ENCODE measurements at regions of chr1 and their contacts with region 1.

Region 1: DNA sequence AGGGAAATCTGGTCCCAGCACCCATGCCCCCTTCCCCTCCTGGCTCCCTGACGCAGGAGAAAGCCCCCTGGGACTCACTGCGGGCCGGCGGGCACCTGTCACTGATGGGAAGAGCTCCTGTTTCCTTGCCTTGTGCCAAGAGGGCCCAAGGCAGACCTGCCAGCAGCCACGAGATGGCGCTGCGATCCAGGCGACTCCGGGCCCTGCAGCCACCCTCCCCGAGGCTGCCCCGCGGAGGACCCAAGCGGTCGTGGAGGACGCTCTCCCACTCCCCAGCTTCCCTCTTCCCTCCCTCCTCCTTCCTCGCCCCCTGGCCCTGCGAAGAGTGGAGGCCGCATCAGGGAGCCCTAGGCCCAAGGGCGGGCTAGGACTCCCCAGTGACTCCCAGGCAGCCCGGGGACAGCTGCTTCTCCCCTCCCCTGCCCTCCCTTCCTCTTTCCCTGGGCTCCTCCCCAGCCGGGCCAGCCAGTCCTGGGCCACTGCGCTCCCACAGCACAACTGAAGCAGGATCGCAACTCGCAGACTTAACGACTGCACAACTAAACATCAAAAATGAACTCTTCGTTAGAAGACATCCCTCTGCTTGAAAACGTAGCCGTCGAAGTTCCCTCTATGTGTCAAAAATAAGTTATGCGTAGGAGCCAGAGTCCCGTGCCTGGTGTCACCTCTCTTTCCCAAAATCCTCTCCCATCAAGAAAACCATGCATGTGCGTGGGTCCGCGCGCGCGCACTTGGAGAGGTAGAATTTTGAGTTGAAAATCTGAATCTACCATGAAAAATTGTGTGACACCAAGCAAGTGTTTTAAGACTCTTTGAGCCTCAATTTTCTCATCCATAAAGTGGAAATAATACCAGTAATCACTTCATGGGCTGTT is 34.2 kb downstream of the BATF3 start:
- DNase-seq: peak; percentile 84
- ATAC-seq: peak; percentile 93
- H3K4me3 Mint-ChIP-seq: peak overlapping the region; percentile 59
- H3K27ac Mint-ChIP-seq: peak overlapping the region; percentile 63
- H3K4me1 Mint-ChIP-seq: peaks cover 16% of the 10 kb centered on the region
- H3K27me3 Mint-ChIP-seq: peaks cover 8% of the 10 kb centered on the region
- CTCF ChIP-seq: peak; percentile 95

Region 2: GRCh38 chr1:212613455-212614390 is 51.8 kb before region 1 on chr1:
- CTCF ChIA-PET with region 1: interaction called, 12 read pairs
- POLR2A ChIA-PET with region 1: no interaction called
- intact Hi-C with region 1: no loop called
- DNase-seq: no peak
- ATAC-seq: no peak
- H3K4me3 Mint-ChIP-seq: no peak overlapping the region
- H3K27ac Mint-ChIP-seq: peak overlapping the region; percentile 64
- H3K4me1 Mint-ChIP-seq: peaks cover 49% of the 10 kb centered on the region
- H3K27me3 Mint-ChIP-seq: peaks cover 4% of the 10 kb centered on the region
- CTCF ChIP-seq: no peak

Region 3: DNA sequence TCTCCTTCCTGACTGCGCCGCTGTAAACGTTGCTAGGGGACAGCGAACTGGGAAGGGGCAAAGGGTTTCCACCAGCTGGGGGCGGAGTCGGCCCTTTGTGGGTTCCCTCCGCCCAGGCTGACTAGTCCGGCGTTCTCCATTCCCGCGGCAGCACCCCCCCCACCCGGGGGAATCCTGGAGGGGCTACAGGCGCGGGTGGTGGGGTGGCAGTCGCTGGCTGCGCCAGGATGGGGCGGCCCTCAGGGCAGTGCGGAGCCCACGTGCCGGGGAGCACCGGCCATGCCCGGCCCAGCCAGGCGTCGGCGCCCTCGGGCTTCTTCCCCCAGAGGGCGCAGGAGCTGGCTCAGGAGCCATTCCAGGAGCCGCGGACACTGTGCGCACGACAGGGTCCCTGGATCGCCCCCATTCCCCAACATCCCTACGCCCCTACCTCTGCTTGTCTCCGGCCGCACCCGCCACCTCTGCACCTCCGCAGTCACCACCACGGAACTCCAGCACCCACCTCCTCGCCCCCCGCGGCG is 33.7 kb after region 1 on chr1:
- CTCF ChIA-PET with region 1: interaction called, 23 read pairs
- POLR2A ChIA-PET with region 1: interaction called, 3 read pairs
- intact Hi-C with region 1: no loop called
- DNase-seq: peak; percentile 75
- ATAC-seq: peak; percentile 75
- H3K4me3 Mint-ChIP-seq: peak overlapping the region; percentile 79
- H3K27ac Mint-ChIP-seq: peak overlapping the region; percentile 92
- H3K4me1 Mint-ChIP-seq: peaks cover 57% of the 10 kb centered on the region
- H3K27me3 Mint-ChIP-seq: peaks cover 1% of the 10 kb centered on the region
- CTCF ChIP-seq: peak; percentile 79

Region 4: DNA sequence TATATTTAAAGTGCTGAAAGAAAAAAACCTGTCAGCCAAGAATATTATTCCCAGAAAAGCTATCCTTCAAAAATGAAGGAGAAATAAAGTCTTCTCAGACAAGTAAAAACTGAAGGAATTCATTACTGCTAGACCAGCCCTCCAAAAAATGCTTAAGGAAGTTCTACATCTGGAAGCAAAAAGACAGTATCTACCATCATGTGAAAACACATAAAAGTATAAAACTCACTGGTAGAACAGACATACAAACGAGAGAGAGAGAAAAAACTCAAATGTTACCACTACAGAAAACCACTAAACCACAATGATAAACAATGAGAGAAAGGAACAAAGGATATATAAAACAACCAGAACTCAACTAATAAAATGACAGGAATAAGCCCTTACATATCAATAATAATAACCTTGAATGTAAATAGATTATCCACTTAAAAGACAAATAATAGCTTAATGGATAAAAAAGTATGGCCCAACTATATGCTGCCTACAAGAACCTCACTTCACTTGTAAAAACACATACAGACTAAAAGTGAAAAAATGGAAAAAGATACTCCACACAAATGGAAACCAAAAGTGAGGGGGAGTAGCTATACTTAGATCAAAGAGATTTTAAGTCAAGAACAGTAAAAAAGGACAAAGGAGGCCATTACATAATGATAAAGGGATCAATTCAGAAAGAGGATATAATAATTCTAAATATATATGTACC is 104.1 kb after region 1 on chr1:
- CTCF ChIA-PET with region 1: interaction called, 17 read pairs
- POLR2A ChIA-PET with region 1: interaction called, 3 read pairs
- intact Hi-C with region 1: no loop called
- DNase-seq: no peak
- ATAC-seq: peak; percentile 91
- H3K4me3 Mint-ChIP-seq: peak overlapping the region; percentile 8
- H3K27ac Mint-ChIP-seq: peak overlapping the region; percentile 68
- H3K4me1 Mint-ChIP-seq: peaks cover 68% of the 10 kb centered on the region
- H3K27me3 Mint-ChIP-seq: no peaks in the 10 kb centered on the region
- CTCF ChIP-seq: no peak

Region 5: GRCh38 chr1:212791676-212792395 is 126.4 kb after region 1 on chr1 and contains the starts of genes NSL1 and TATDN3:
- CTCF ChIA-PET with region 1: interaction called, 37 read pairs
- POLR2A ChIA-PET with region 1: interaction called, 7 read pairs
- intact Hi-C with region 1: no loop called
- DNase-seq: peak; percentile 89
- ATAC-seq: peak; percentile 94
- H3K4me3 Mint-ChIP-seq: peak within 1 kb of the TSS; percentile 100
- H3K27ac Mint-ChIP-seq: peak within 1 kb of the TSS; percentile 97
- H3K4me1 Mint-ChIP-seq: peaks cover 29% of the 10 kb centered on the region
- H3K27me3 Mint-ChIP-seq: no peaks in the 10 kb centered on the region
- CTCF ChIP-seq: no peak
- total RNA-seq, gene NSL1: 29.6 to 34.9 TPM
- total RNA-seq, gene TATDN3: 17.4 to 24.2 TPM

Measured in activated CD8-positive, alpha-beta T cell treated with anti-CD3 and anti-CD28 coated beads for 36 hours (primary cell).